ENCODE measurements at regions of chr3 and their contacts with region 1.

Region 1: DNA sequence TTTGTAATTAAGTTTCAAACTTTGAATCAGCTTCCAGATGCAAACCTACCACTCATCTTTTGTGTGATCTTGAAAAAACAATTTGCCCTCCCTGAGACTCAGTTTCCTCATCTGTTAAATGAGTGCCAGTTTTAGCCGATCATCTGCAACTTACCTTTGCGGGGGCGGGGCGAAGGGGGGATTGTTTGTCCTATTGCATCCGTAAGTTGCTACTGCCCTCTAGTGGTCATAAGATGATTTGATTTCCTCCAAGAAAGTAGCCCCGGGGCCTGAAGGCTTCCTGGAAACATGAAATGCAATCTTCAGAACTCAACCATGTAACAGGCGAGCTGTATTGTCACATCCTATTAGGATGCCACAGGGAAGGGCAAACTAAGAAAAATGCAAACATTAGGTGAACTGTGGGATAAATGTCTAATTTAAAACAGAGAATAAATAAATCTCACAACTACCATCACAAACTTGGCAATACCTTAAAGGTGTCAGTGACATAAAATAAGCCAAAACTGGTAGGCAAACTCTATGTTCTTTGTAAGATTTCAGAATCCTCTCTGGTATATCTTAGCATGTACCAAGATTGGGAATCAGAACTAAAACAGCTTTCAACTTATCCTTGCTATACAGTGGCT is 63.5 kb upstream of the CLDN18 start:
- DNase-seq: no peak
- H3K4me3 ChIP-seq: no peak overlapping the region
- H3K27ac ChIP-seq: no peak overlapping the region
- H3K4me1 ChIP-seq: no peaks in the 10 kb centered on the region
- H3K27me3 ChIP-seq: no peaks in the 10 kb centered on the region
- CTCF ChIP-seq: peak in 2 of 3 donors; percentile 19 to 47
- POLR2A ChIP-seq: no peak

Region 2: DNA sequence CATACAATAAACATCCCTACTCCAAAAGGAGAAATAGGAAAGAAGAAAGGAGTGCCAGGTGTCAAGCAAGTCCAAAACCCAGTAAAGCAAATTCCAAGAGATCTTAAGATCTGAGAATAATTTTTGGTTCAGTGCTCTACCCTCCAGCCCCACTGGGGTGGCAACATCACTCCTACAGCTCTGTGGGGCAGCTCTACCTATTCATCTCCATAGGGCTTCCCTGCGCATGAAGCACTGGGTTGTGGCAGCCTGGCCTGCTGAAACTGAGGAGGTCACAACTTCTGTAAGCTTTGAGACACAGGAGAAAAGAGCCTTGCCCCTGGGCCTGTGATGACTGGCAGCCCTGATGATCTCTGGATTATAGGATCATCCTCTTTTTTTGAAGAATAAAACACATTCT is 560.5 kb before region 1 on chr3:
- intact Hi-C with region 1: loop called (anchors 10 kb)
- DNase-seq: no peak
- H3K4me3 ChIP-seq: no peak overlapping the region
- H3K27ac ChIP-seq: no peak overlapping the region
- H3K4me1 ChIP-seq: no peaks in the 10 kb centered on the region
- H3K27me3 ChIP-seq: no peaks in the 10 kb centered on the region
- CTCF ChIP-seq: no peak
- POLR2A ChIP-seq: no peak